ENCODE measurements at regions of chr9 and their contacts with region 1.

Region 1: DNA sequence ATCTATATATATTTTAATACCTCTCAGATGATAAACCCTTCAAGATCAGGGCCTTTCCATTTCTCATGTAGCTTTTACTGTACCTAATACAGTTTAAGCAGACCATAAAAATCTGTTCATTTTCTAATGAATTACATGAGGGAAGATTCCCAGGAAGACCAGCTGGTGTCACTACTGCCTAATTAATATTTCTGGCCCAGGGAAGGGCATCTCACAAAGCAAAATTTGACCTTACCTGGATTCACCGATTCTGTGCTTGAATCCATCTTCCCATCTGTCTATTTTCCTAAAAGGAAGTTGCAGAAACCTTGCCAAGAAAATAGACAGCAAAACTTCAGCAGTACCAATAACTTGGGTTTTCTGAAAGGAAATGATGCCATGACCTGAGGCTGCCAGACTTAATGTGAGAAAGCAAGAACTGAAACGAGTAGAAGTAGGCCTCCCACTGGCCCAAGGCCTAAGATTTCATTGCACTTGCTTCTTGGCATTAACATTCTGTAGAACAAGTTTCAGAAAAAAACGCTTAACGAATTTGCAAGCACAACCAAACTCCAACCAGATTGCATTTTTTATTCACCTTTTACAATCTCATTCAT is 83.0 kb upstream of the GLIS3 start:
- DNase-seq: no peak
- ATAC-seq: no peak
- H3K4me3 ChIP-seq: no peak overlapping the region
- H3K27ac ChIP-seq: no peak overlapping the region
- H3K4me1 ChIP-seq: no peaks in the 10 kb centered on the region
- H3K27me3 ChIP-seq: no peaks in the 10 kb centered on the region
- CTCF ChIP-seq: peak; percentile 38; the same call in 1 of the 2 replicates

Region 2: GRCh38 chr9:4193391-4193790 is 189.4 kb before region 1 on chr9:
- CTCF ChIA-PET with region 1: no interaction called
- POLR2A ChIA-PET with region 1: no interaction called
- in situ Hi-C with region 1: no loop called
- intact Hi-C with region 1: no loop called
- DNase-seq: no peak
- ATAC-seq: no peak
- H3K4me3 ChIP-seq: no peak overlapping the region
- H3K27ac ChIP-seq: no peak overlapping the region
- H3K4me1 ChIP-seq: no peaks in the 10 kb centered on the region
- H3K27me3 ChIP-seq: no peaks in the 10 kb centered on the region
- CTCF ChIP-seq: no peak

Region 3: DNA sequence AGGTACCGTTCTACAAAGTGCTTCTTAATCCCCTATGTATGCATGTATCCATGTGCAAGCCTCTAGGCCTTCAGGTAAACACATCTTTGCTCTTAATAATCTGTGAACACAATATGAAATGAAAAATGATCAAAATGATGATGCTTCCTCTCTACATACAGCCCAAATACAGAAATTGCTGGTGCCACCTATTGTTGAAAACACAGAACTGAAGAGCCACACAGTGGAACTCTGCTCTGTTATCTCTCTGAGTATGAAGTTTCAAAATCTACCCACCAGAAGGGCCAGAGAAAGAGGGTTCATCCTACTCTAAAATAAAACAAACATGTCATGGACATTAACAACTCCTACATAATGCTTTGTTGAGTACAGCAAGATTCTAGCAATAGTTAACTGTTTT is 154.2 kb before region 1 on chr9:
- CTCF ChIA-PET with region 1: no interaction called
- POLR2A ChIA-PET with region 1: no interaction called
- in situ Hi-C with region 1: no loop called
- intact Hi-C with region 1: no loop called
- DNase-seq: no peak
- ATAC-seq: peak; percentile 76; the same call in 1 of the 2 replicates
- H3K4me3 ChIP-seq: no peak overlapping the region
- H3K27ac ChIP-seq: no peak overlapping the region
- H3K4me1 ChIP-seq: no peaks in the 10 kb centered on the region
- H3K27me3 ChIP-seq: no peaks in the 10 kb centered on the region
- CTCF ChIP-seq: peak; percentile 38

Region 4: DNA sequence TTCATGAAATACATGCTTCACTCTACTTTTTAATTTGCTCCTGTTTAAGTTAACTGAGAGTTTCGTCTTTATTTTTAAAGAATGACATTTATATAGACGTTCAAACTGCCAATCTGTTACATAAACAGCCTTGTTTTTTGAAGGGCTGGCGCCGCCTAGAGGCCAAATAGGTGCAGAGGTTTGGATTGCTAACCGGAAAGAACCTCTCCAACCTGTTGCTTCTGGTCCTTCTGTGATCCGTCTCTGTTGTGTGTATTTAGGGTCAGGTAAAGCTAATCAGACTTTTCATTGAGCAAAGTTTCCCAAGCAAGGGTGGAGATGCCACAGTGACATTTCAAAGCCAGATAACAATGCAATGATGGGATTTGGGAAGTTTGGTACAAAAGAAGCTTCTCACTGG is 43.5 kb before region 1 on chr9:
- CTCF ChIA-PET with region 1: no interaction called
- POLR2A ChIA-PET with region 1: no interaction called
- in situ Hi-C with region 1: no loop called
- intact Hi-C with region 1: no loop called
- DNase-seq: peak; percentile 45
- ATAC-seq: no peak
- H3K4me3 ChIP-seq: no peak overlapping the region
- H3K27ac ChIP-seq: no peak overlapping the region
- H3K4me1 ChIP-seq: no peaks in the 10 kb centered on the region
- H3K27me3 ChIP-seq: no peaks in the 10 kb centered on the region
- CTCF ChIP-seq: peak; percentile 59

Region 5: GRCh38 chr9:4435197-4435596 is 52.4 kb after region 1 on chr9:
- CTCF ChIA-PET with region 1: no interaction called
- POLR2A ChIA-PET with region 1: no interaction called
- in situ Hi-C with region 1: no loop called
- intact Hi-C with region 1: no loop called
- DNase-seq: no peak
- ATAC-seq: no peak
- H3K4me3 ChIP-seq: no peak overlapping the region
- H3K27ac ChIP-seq: no peak overlapping the region
- H3K4me1 ChIP-seq: no peaks in the 10 kb centered on the region
- H3K27me3 ChIP-seq: no peaks in the 10 kb centered on the region
- CTCF ChIP-seq: no peak

Region 6: GRCh38 chr9:4548811-4549725 is 166.2 kb after region 1 on chr9:
- CTCF ChIA-PET with region 1: no interaction called
- POLR2A ChIA-PET with region 1: no interaction called
- in situ Hi-C with region 1: no loop called
- intact Hi-C with region 1: loop called (anchors 5 kb)
- DNase-seq: no peak
- ATAC-seq: no peak
- H3K4me3 ChIP-seq: no peak overlapping the region
- H3K27ac ChIP-seq: no peak overlapping the region
- H3K4me1 ChIP-seq: no peaks in the 10 kb centered on the region
- H3K27me3 ChIP-seq: no peaks in the 10 kb centered on the region
- CTCF ChIP-seq: peak; percentile 50

Region 7: GRCh38 chr9:4662108-4662988 is 279.5 kb after region 1 on chr9 and contains the start of gene PLPP6:
- CTCF ChIA-PET with region 1: no interaction called
- POLR2A ChIA-PET with region 1: no interaction called
- in situ Hi-C with region 1: no loop called
- intact Hi-C with region 1: loop called (anchors 10 kb)
- DNase-seq: no peak
- ATAC-seq: peak; percentile 96
- H3K4me3 ChIP-seq: peak within 1 kb of the TSS; percentile 50 to 53
- H3K27ac ChIP-seq: no peak within 1 kb of the TSS
- H3K4me1 ChIP-seq: no peaks in the 10 kb centered on the region; the same call in 1 of the 2 replicates
- H3K27me3 ChIP-seq: no peaks in the 10 kb centered on the region
- CTCF ChIP-seq: peak; percentile 49
- total RNA-seq, gene PLPP6: 1.8 TPM